ENCODE measurements at regions of chr3 and their contacts with region 1.

Region 1: GRCh38 chr3:9422712-9423424 is 25.5 kb downstream of the SETD5 start:
- DNase-seq: peak; percentile 98
- H3K4me3 ChIP-seq: peak overlapping the region; percentile 7 to 50 (median 26)
- H3K27ac ChIP-seq: peak overlapping the region; percentile 93
- H3K4me1 ChIP-seq: peaks cover 49% of the 10 kb centered on the region
- H3K27me3 ChIP-seq: no peaks in the 10 kb centered on the region
- CTCF ChIP-seq: peak; percentile 69 to 74

Region 2: DNA sequence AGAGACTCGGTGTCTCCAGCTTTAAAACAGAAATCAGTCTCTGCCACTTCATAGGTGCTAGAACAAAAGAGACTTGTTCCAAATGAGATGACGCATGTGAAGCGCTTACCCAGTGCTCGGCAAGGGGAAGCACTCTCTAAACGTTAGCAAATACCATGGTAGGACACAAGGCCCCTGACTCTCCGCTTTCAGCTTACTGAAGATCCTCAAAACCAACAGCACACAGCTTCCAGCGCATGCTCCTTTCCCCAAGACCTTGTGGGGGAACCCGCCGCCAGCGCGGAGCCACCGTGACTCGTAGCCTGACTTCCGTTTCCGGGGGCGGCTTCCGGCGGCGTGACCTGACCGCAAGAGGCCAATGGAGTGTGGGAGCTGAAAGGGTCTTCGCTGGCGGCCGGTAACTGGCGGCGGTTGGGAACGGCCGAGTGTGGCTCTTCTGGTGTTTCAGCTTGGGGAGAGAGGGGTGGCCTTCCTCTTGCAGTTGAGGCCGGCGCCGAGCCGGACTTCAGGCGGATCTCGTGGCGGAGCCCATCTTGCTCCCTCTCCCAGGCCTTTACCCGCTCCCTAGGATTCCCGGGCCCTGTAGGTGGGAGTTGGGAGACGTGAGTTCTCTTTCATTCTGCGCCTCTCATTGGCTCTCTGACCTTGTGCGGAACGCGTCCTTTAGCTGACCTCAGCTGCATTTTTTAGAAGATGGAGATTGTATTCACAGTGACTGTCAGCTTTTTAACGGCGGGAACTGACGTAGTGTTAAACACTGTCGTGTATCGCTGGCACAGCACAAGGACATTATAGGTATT is 59.9 kb before region 1 on chr3 and contains the start of gene THUMPD3:
- CTCF ChIA-PET with region 1: no interaction called
- dilution Hi-C with region 1: no loop called
- in situ Hi-C with region 1: loop called in 1 of 2 experiments (anchors 10 kb)
- intact Hi-C with region 1: loop called (anchors 2 kb)
- DNase-seq: peak; percentile 89
- H3K4me3 ChIP-seq: peak within 1 kb of the TSS; percentile 70 to 83 (median 74)
- H3K27ac ChIP-seq: peak within 1 kb of the TSS; percentile 81
- H3K4me1 ChIP-seq: peaks cover 12% of the 10 kb centered on the region
- H3K27me3 ChIP-seq: no peaks in the 10 kb centered on the region
- CTCF ChIP-seq: no peak
- total RNA-seq, gene THUMPD3: 32.7 to 48.4 TPM

Region 3: DNA sequence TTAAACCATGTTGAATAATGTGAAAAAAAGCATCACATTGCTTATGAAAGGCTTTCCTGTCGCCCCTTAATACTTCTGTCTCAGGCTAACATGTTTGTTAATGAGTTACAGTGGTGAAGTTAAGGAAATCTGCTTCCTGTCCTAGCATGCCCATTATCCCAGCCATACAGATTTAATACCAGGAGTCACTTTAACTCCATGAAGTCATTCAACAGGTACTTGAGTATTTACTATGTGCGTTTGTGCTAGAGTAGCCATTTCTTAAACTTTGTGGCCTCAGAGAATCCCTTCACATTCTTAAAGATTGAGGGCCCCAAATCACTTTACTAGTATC is 35.6 kb before region 1 on chr3:
- CTCF ChIA-PET with region 1: no interaction called
- dilution Hi-C with region 1: no loop called
- in situ Hi-C with region 1: no loop called
- intact Hi-C with region 1: loop called (anchors 1 kb)
- DNase-seq: peak; percentile 30
- H3K4me3 ChIP-seq: no peak overlapping the region
- H3K27ac ChIP-seq: no peak overlapping the region
- H3K4me1 ChIP-seq: peaks cover 16% of the 10 kb centered on the region
- H3K27me3 ChIP-seq: no peaks in the 10 kb centered on the region
- CTCF ChIP-seq: no peak

Region 4: DNA sequence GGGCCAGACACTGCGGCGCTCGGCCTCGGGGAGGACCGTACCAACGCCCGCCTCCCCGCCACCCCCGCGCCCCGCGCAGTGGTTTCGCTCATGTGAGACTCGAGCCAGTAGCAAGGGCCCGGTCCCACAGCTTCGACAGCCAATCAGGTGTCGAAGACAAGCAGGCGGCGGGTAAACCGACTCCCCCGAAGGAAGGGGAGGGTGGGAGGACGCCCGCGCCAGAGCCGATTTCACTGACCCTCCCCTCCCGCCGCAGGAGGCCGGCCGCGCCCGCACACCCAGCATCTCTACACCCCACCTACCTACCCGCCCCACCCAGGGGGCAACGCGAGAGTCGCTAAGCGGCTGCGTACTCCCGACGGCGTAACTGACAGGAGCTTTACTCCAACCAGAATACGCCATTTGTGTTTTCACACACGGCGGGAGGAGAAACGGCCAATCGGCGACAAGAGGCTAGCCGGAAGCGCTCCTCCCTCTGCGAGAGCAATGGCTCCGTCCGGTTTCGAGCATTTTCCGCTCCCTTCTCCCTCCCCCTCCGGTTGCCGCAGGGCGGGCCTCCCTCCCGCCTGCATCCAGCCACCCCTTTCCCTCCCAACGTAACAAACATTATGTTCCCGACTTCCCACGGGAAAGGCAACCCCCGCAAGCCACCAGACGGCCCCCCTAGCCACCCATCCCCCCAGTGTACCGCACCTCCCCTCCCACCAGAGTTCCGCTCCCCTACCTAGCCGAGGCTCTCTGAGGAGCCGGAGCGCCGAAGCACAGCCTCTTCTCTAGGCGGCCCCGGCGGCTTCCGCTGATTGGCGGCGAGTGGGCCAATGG is 26.0 kb before region 1 on chr3:
- CTCF ChIA-PET with region 1: interaction called, 4 read pairs
- dilution Hi-C with region 1: no loop called
- in situ Hi-C with region 1: no loop called
- intact Hi-C with region 1: loop called (anchors 1 kb)
- DNase-seq: peak; percentile 99
- H3K4me3 ChIP-seq: peak overlapping the region; percentile 51 to 81 (median 67)
- H3K27ac ChIP-seq: peak overlapping the region; percentile 87
- H3K4me1 ChIP-seq: peaks cover 27% of the 10 kb centered on the region
- H3K27me3 ChIP-seq: no peaks in the 10 kb centered on the region
- CTCF ChIP-seq: no peak

Measured in mammary epithelial cell (primary cell).